ENCODE measurements at regions of chr13 and their contacts with region 1.

Region 1: DNA sequence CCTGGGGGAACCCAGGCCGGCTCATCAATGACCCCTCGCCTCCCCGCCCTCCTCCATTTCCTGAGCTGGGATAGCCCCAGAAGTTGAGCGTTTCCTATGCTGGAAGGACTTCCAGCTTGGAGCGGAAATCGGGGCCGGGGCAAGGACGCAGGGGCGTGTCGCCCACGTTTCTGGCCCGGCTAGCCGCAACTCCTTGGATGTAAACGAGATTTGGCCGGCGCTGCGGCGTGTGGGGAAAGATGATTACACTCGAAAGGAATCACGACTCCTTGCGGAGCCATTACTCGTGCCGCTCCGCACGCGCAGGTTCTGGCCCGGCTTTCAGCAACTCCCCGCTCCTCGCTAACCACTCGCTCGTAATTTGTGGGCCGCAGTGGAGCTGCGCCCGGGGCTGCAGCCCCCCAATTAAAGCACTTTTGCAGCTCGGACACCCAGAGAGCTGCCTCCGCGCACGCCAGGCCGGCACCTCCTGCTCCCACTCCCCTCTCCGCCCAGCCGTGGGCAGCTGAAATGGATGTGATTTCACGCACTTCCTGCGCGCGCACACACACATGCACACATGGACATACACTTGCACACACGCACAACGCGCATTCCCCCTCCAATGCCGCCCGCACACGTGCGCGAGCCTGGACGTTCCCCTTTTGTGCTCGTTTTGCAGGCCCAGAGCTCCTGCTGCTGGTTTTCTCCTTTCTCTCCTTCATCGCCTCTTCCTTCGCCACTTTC is 15.7 kb downstream of the ZIC5 start:
- DNase-seq: no peak
- H3K4me3 ChIP-seq: peak overlapping the region in 1 of 2 donors; percentile 27
- H3K27ac ChIP-seq: no peak overlapping the region
- H3K4me1 ChIP-seq: peaks cover 0 to 44% (median 31%) of the 10 kb centered on the region in 4 donors
- H3K27me3 ChIP-seq: peaks cover 7 to 98% of the 10 kb centered on the region in 2 donors
- CTCF ChIP-seq: no peak

Region 2: DNA sequence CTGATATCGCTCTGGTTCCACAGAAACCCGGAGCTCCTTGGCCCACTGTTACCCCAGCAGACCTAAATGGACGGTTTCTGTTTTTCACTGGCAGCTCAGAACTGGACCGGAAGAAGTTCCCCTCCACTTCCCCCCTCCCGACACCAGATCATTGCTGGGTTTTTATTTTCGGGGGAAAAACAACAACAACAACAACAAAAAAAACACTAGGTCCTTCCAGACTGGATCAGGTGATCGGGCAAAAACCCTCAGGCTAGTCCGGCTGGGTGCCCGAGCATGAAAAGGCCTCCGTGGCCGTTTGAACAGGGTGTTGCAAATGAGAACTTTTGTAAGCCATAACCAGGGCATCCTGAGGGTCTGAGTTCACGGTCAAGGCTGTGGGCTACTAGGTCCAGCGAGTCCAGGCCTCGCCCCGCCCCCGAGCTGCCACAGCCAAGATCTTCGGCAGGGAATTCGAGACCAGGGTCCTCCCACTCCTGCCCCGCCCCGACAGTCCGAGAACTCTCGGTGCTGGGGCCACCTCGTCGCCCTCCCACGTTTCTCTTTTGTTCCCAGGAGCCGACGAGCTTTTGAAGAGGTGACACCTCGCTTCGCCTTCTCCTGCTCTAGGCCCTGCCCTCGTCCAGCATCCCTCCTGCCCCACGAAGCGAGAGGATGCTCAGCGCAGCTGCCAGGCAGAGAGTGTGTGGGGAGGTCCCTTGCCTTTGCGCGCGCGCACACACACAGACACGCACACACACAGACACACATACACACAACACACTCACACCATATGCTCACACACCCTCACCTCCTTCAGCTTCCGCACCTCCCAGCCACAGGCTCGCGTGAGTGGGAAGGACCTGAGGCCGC is 34.4 kb after region 1 on chr13:
- intact Hi-C with region 1: loop called (anchors 5 kb)
- DNase-seq: no peak
- H3K4me3 ChIP-seq: no peak overlapping the region
- H3K27ac ChIP-seq: no peak overlapping the region
- H3K4me1 ChIP-seq: peaks cover 0 to 25% (median 18%) of the 10 kb centered on the region in 4 donors
- H3K27me3 ChIP-seq: peaks cover 0 to 100% of the 10 kb centered on the region in 2 donors
- CTCF ChIP-seq: no peak

Region 3: GRCh38 chr13:100674848-100675660 is 719.1 kb after region 1 on chr13:
- intact Hi-C with region 1: loop called (anchors 10 kb)
- DNase-seq: peak; percentile 99 to 100
- H3K4me3 ChIP-seq: peak overlapping the region; percentile 89 to 94
- H3K27ac ChIP-seq: peak overlapping the region; percentile 74 to 84
- H3K4me1 ChIP-seq: peaks cover 0 to 20% (median 13%) of the 10 kb centered on the region in 4 donors
- H3K27me3 ChIP-seq: no peaks in the 10 kb centered on the region
- CTCF ChIP-seq: peak in 1 of 2 experiments; percentile 28